SK-N-SH (cell line): ENCODE measurements at regions of chr3 and their contacts with region 1.

Region 1: DNA sequence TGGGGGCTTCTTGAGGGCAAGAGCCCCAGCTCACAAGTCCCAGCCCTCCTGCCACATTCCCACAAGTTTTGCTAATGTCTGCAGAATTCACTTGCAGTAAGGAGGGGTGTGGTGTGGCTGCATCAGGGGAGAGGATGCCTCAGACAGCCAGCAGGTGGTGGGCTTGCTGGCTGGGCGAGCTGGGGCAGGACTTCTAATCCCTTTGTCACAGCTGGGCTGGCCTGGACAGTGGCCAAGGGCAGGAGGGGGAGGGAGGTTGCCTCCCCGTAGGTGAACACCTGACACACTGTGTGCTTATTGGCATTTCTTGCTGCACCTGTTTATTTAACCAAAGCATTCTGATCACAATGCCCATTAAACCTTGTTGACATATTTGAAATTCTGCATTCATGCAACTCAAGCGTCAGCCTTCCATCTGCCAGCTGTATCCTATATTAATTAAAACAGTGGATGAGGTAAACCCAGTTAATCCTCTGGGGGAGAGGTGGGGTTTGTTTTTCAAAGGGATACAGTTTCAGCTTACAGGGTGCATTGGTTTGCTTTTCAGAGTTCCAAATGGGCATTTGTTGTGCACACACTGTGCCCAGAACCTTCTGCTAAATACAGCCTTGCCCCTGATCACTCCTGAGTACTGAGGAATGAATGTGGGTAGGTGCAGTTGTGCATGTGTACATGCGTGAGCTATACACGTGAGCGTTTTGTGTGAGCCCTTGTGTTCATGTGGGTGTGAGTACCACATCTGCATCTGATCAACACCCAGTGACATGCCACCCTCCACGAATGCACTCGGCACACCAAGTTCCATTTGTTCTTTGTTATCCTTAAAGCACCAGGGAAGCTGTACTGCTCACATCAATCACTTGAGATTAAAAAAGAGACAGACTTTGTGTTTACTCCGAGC is 268.7 kb downstream of the XXYLT1 start:
- DNase-seq: peak; percentile 75
- H3K4me3 ChIP-seq: no peak overlapping the region
- H3K27ac ChIP-seq: no peak overlapping the region
- H3K4me1 ChIP-seq: peaks cover 0 to 17% of the 10 kb centered on the region in 2 experiments; a peak in 2 of 4 replicates
- H3K27me3 ChIP-seq: peaks cover 4% of the 10 kb centered on the region; the same call in 1 of the 2 replicates
- CTCF ChIP-seq: peak; percentile 51
- EP300 ChIP-seq: no peak
- RAD21 ChIP-seq: peak; percentile 68

Region 2: GRCh38 chr3:195015021-195015420 is 12.8 kb after region 1 on chr3:
- CTCF ChIA-PET with region 1: interaction called, 10 read pairs
- POLR2A ChIA-PET with region 1: no interaction called
- DNase-seq: no peak
- H3K4me3 ChIP-seq: no peak overlapping the region
- H3K27ac ChIP-seq: peak overlapping the region in 1 of 2 experiments; percentile 98; a peak in 2 of 4 replicates
- H3K4me1 ChIP-seq: peaks cover 0 to 34% of the 10 kb centered on the region in 2 experiments; a peak in 2 of 4 replicates
- H3K27me3 ChIP-seq: 0 out of 2 replicates have a peak, but pooled peaks cover 16% of the 10 kb centered on the region
- CTCF ChIP-seq: no peak
- EP300 ChIP-seq: no peak
- RAD21 ChIP-seq: no peak